ENCODE measurements at regions of chr3 and their contacts with region 1.

Region 1: GRCh38 chr3:46953234-46954010 is 23.1 kb downstream of the CCDC12 start:
- DNase-seq: no peak
- ATAC-seq: peak; percentile 74
- H3K4me3 ChIP-seq: peak overlapping the region; percentile 11; the same call in 1 of the 2 replicates
- H3K27ac ChIP-seq: peak overlapping the region; percentile 75
- H3K4me1 ChIP-seq: peaks cover 73% of the 10 kb centered on the region
- H3K27me3 ChIP-seq: no peaks in the 10 kb centered on the region
- CTCF ChIP-seq: no peak
- EP300 ChIP-seq: 0 out of 4 replicates have a peak, but pooled peaks of 1 of the 2 experiments have one; percentile 23
- POLR2A ChIP-seq: no peak
- RAD21 ChIP-seq: no peak

Region 2: GRCh38 chr3:46935168-46935858 is 18.1 kb before region 1 on chr3:
- CTCF ChIA-PET with region 1: interaction called, 27 read pairs
- POLR2A ChIA-PET with region 1: interaction called, 163 read pairs
- RAD21 ChIA-PET with region 1: interaction called, 48 read pairs
- SMC1A ChIA-PET with region 1: interaction called, 298 read pairs
- in situ Hi-C with region 1: no loop called
- intact Hi-C with region 1: no loop called
- DNase-seq: no peak
- ATAC-seq: no peak
- H3K4me3 ChIP-seq: no peak overlapping the region
- H3K27ac ChIP-seq: no peak overlapping the region
- H3K4me1 ChIP-seq: peaks cover 54% of the 10 kb centered on the region
- H3K27me3 ChIP-seq: no peaks in the 10 kb centered on the region
- CTCF ChIP-seq: no peak
- EP300 ChIP-seq: no peak
- POLR2A ChIP-seq: peak; percentile 4; the same call in 1 of the 2 replicates
- RAD21 ChIP-seq: no peak

Region 3: GRCh38 chr3:46970391-46971091 is 17.1 kb after region 1 on chr3:
- CTCF ChIA-PET with region 1: interaction called, 31 read pairs
- POLR2A ChIA-PET with region 1: interaction called, 25 read pairs
- RAD21 ChIA-PET with region 1: interaction called, 14 read pairs
- SMC1A ChIA-PET with region 1: interaction called, 27 read pairs
- in situ Hi-C with region 1: no loop called
- intact Hi-C with region 1: no loop called
- DNase-seq: no peak
- ATAC-seq: no peak
- H3K4me3 ChIP-seq: no peak overlapping the region; the same call in 1 of the 2 replicates
- H3K27ac ChIP-seq: peak overlapping the region; percentile 41
- H3K4me1 ChIP-seq: peaks cover 46% of the 10 kb centered on the region
- H3K27me3 ChIP-seq: no peaks in the 10 kb centered on the region
- CTCF ChIP-seq: no peak
- EP300 ChIP-seq: no peak
- POLR2A ChIP-seq: no peak
- RAD21 ChIP-seq: no peak

Region 4: DNA sequence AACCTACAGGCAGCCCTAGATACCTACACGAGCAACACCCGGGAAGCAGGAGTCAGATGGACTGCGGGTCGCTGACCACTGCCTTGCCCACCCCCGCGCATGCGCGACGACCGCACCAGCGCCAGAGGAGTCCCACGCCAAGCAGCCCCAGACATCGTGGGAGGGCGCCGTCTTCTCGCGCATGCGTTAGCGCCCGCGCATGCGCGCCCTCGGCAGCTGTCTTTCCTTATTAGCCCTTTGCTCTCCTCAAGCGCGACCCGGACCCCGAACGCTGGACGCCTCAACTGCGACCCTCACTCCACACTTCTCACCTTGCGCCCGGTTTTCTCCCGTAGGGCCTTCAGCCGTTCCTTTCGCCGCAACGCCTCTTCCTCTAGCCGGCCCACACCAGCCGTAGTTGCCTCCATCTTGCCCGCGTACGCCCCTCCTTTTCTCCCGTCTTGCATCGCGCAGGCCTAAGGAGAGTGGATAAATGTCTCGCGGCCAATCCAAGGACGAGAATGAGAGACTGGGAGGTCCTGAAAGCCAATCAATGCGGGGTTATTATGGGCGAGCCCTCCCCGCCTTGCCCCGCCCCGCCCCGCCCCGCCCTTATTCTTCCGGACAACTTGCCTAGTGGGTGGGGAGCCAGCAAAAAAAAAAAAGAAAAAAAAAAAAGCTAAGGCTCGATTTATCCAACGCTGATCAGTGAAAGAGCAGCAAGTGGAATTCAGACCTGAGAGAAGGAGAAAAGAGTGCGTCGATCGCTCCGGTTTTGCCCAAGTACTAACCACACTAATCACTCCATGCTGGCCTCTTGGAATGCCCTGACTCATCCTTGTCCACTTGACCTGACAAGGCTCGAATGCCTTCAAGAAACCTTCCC is 23.1 kb after region 1 on chr3 and contains the start of gene CCDC12:
- CTCF ChIA-PET with region 1: interaction called, 6 read pairs
- POLR2A ChIA-PET with region 1: interaction called, 25 read pairs
- RAD21 ChIA-PET with region 1: interaction called, 18 read pairs
- SMC1A ChIA-PET with region 1: interaction called, 27 read pairs
- in situ Hi-C with region 1: no loop called
- intact Hi-C with region 1: no loop called
- DNase-seq: peak; percentile 94
- ATAC-seq: peak; percentile 82
- H3K4me3 ChIP-seq: peak within 1 kb of the TSS; percentile 95
- H3K27ac ChIP-seq: peak within 1 kb of the TSS; percentile 91
- H3K4me1 ChIP-seq: peaks cover 32% of the 10 kb centered on the region
- H3K27me3 ChIP-seq: no peaks in the 10 kb centered on the region
- CTCF ChIP-seq: no peak
- EP300 ChIP-seq: no peak
- POLR2A ChIP-seq: peak; percentile 94
- RAD21 ChIP-seq: no peak
- polyA plus RNA-seq, gene CCDC12: 9.2 to 22.5 TPM

Region 5: DNA sequence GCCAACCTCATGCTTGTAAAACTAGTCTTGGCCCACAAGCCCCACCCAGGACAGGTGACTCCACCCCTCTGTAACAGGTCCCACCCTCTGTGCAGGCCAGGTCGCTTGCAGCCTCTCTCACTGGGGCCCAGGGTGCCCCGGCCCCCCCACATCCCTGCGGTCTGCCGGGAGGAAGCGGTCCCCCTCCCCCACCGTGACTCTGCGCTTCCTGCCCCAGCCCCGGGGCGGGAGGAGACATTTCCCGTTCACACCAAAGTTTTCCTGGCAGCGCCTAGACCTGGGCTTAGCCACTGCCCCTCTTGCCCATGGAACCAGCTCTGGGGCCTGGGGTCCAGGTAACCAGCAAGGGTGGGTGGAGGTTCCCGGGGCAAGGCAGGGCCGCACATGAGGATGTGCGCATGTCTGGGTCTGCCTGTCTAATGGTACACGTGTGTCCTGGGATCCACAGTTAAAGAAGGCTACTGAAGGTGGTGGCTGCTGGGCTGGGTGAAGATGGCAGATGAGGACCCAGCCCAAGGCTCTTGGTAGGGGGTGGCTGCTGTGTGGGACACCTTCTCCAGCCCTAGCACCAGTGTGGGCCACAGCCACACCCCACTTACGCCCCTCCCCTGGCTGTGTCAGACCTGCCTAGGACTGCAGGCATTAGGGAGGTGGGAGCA is 34.5 kb after region 1 on chr3:
- CTCF ChIA-PET with region 1: interaction called, 6 read pairs
- POLR2A ChIA-PET with region 1: interaction called, 7 read pairs
- RAD21 ChIA-PET with region 1: interaction called, 10 read pairs
- SMC1A ChIA-PET with region 1: interaction called, 6 read pairs
- in situ Hi-C with region 1: no loop called
- intact Hi-C with region 1: no loop called
- DNase-seq: peak; percentile 63
- ATAC-seq: peak; percentile 85
- H3K4me3 ChIP-seq: peak overlapping the region; percentile 57
- H3K27ac ChIP-seq: peak overlapping the region; percentile 98
- H3K4me1 ChIP-seq: peaks cover 62% of the 10 kb centered on the region
- H3K27me3 ChIP-seq: no peaks in the 10 kb centered on the region
- CTCF ChIP-seq: no peak
- EP300 ChIP-seq: 0 out of 4 replicates have a peak, but pooled peaks of 1 of the 2 experiments have one; percentile 51
- POLR2A ChIP-seq: peak; percentile 68
- RAD21 ChIP-seq: no peak